IMR-90 (cell line): ENCODE measurements at regions of chr12 and their contacts with region 1.

Region 1: GRCh38 chr12:83920821-83921547 is 991.6 kb downstream of the SLC6A15 start:
- DNase-seq: no peak
- ATAC-seq: no peak
- H3K4me3 ChIP-seq: no peak overlapping the region
- H3K27ac ChIP-seq: no peak overlapping the region
- H3K4me1 ChIP-seq: no peaks in the 10 kb centered on the region
- H3K27me3 ChIP-seq: no peaks in the 10 kb centered on the region
- CTCF ChIP-seq: no peak
- POLR2A ChIP-seq: no peak
- RAD21 ChIP-seq: no peak

Region 2: GRCh38 chr12:84016956-84017355 is 96.0 kb after region 1 on chr12:
- CTCF ChIA-PET with region 1: no interaction called
- POLR2A ChIA-PET with region 1: no interaction called
- dilution Hi-C with region 1: no loop called
- in situ Hi-C with region 1: no loop called
- intact Hi-C with region 1: no loop called
- DNase-seq: no peak
- ATAC-seq: no peak
- H3K4me3 ChIP-seq: no peak overlapping the region
- H3K27ac ChIP-seq: no peak overlapping the region
- H3K4me1 ChIP-seq: no peaks in the 10 kb centered on the region
- H3K27me3 ChIP-seq: no peaks in the 10 kb centered on the region
- CTCF ChIP-seq: no peak
- POLR2A ChIP-seq: no peak
- RAD21 ChIP-seq: no peak

Region 3: GRCh38 chr12:84222841-84223240 is 301.9 kb after region 1 on chr12:
- CTCF ChIA-PET with region 1: no interaction called
- POLR2A ChIA-PET with region 1: no interaction called
- dilution Hi-C with region 1: no loop called
- in situ Hi-C with region 1: no loop called
- intact Hi-C with region 1: loop called (anchors 10 kb)
- DNase-seq: no peak
- ATAC-seq: no peak
- H3K4me3 ChIP-seq: no peak overlapping the region
- H3K27ac ChIP-seq: no peak overlapping the region
- H3K4me1 ChIP-seq: no peaks in the 10 kb centered on the region
- H3K27me3 ChIP-seq: no peaks in the 10 kb centered on the region
- CTCF ChIP-seq: no peak
- POLR2A ChIP-seq: no peak
- RAD21 ChIP-seq: no peak